ENCODE measurements at regions of chr2 and their contacts with region 1.

Region 1: GRCh38 chr2:213251618-213252017 is 32.6 kb upstream of the SPAG16 start:
- DNase-seq: no peak
- H3K4me3 ChIP-seq: no peak overlapping the region
- H3K27ac ChIP-seq: no peak overlapping the region
- H3K4me1 ChIP-seq: no peaks in the 10 kb centered on the region
- H3K27me3 ChIP-seq: no peaks in the 10 kb centered on the region
- CTCF ChIP-seq: peak; percentile 34 to 69 (median 60)
- POLR2A ChIP-seq: no peak

Region 2: GRCh38 chr2:212494413-212495020 is 757.1 kb before region 1 on chr2:
- intact Hi-C with region 1: no loop called
- DNase-seq: no peak
- H3K4me3 ChIP-seq: no peak overlapping the region
- H3K27ac ChIP-seq: no peak overlapping the region
- H3K4me1 ChIP-seq: no peaks in the 10 kb centered on the region
- H3K27me3 ChIP-seq: no peaks in the 10 kb centered on the region
- CTCF ChIP-seq: no peak
- POLR2A ChIP-seq: no peak

Region 3: GRCh38 chr2:213545964-213546475 is 294.4 kb after region 1 on chr2:
- intact Hi-C with region 1: no loop called
- DNase-seq: no peak
- H3K4me3 ChIP-seq: no peak overlapping the region
- H3K27ac ChIP-seq: no peak overlapping the region
- H3K4me1 ChIP-seq: no peaks in the 10 kb centered on the region
- H3K27me3 ChIP-seq: no peaks in the 10 kb centered on the region
- CTCF ChIP-seq: no peak
- POLR2A ChIP-seq: no peak

Region 4: GRCh38 chr2:213934560-213934959 is 682.9 kb after region 1 on chr2:
- intact Hi-C with region 1: loop called (anchors 10 kb)
- DNase-seq: no peak
- H3K4me3 ChIP-seq: no peak overlapping the region
- H3K27ac ChIP-seq: no peak overlapping the region
- H3K4me1 ChIP-seq: no peaks in the 10 kb centered on the region
- H3K27me3 ChIP-seq: no peaks in the 10 kb centered on the region
- CTCF ChIP-seq: peak in 9 of 11 experiments; percentile 17 to 54 (median 42)
- POLR2A ChIP-seq: no peak